Pancreas (tissue), 10 donors: ENCODE measurements at regions of chr7 and their contacts with region 1.

Region 1: DNA sequence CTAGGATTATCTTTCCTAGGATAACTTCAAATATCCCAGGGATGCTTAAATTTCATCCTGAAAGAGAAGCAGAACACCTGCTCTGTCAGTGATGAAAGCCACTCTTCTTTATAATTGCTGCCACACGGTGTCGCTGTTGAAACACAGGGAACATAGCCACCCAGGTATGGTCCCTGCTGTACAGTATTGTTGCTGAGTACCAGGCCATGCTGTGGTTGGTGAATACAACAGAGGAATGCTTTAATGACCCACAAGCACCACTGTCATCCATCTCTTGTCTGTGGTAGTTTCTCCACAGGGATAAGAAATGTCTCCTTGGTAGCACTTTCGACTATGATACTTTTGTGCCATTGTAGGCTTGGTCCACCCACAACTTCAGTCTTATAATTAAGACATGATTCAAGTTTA is 70.6 kb upstream of the STARD3NL start:
- DNase-seq: peak in 5 of 6 donors; percentile 41 to 71 (median 50)
- ATAC-seq: peak; percentile 86 to 97 (median 94)
- H3K4me3 ChIP-seq: no peak overlapping the region
- H3K27ac ChIP-seq: no peak overlapping the region
- H3K4me1 ChIP-seq: no peaks in the 10 kb centered on the region
- H3K27me3 ChIP-seq: no peaks in the 10 kb centered on the region
- CTCF ChIP-seq: peak; percentile 60 to 76 (median 68)

Region 2: DNA sequence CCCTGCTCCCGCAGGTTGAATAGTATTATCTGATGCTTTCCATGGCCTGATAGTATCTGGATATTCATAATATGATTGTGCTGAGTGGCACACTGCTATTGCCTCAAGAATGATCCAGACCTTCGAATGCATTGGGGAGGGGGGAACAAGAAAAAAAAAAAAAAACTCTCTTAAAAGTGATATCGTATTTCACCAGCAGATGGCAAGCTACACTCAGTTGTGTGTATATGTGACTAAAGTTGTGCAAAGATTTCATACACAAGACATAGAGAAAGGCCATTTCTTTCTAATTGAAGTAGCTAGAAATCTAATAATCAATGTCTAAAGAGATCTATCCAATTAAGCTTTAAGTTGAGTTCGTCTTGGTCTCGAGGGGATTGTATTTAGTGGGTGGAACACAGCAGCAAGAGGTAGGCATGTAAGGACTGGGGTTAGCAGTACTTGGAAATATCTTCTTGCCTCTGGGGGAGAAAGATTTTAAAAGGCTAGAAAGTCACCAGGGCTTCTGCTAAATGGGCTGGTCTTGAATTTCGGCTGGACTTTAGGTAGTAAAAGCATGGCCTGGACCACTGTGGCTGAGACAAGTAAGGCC is 206.2 kb before region 1 on chr7:
- intact Hi-C with region 1: loop called in 1 of 3 experiments (anchors 10 kb)
- DNase-seq: no peak
- ATAC-seq: peak; percentile 70 to 87 (median 84)
- H3K4me3 ChIP-seq: no peak overlapping the region
- H3K27ac ChIP-seq: no peak overlapping the region
- H3K4me1 ChIP-seq: no peaks in the 10 kb centered on the region
- H3K27me3 ChIP-seq: no peaks in the 10 kb centered on the region
- CTCF ChIP-seq: peak in 3 of 4 donors; percentile 27 to 46 (median 31)

Region 3: DNA sequence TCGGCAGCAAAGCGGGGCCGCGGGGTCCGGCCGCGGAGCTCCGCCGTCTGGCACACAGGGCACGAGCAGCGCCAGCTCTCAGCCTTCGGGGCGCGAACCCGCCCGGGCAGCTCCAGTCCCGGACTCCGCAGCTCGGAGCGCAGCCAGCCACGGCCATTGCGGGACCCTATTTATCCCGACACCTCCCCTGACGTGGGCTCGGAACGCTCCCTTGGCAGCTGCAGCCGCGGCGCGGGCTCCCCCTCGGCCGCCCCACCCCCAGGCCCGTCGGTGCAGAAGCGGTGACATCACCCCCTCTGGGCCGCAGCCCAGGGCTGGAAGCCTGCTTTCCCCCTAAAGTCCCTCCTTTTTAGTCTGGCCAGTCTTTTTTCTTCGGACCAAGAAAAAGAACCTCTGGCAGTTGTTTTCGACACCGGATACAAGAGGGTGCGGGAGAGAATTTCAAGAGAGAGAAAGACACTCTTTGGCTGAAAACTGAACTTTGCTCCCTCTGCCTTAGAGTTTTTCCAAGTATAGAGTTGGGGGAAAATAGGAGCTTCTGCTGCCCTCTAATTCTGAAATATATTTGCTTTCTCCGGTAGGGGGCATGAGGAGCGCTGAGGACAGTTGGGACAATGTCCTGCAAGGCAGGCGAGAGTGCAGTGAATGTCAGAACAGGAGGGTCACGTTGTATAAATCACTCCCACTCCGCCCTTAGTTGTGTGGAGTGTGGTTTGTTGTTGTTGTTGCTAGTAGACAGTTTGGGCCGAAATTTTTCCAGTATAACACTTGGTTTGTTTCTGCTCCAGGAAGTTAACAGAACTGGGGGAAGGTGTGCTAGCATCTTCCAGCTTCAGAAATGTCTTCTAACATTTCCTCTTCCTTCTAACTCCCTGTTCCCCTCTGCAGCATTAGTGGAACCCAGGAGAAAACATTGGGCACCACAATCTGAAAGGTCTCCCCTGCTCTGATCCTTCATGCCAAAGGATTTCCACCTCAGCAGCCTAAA is 190.5 kb before region 1 on chr7 and contains the start of gene SFRP4:
- intact Hi-C with region 1: loop called in 1 of 3 experiments (anchors 10 kb)
- DNase-seq: peak; percentile 66 to 81 (median 73)
- ATAC-seq: peak; percentile 65 to 76 (median 70)
- H3K4me3 ChIP-seq: peak within 1 kb of the TSS; percentile 35 to 62 (median 53)
- H3K27ac ChIP-seq: peak within 1 kb of the TSS; percentile 6 to 55 (median 38)
- H3K4me1 ChIP-seq: peaks cover 0 to 17% (median 0%) of the 10 kb centered on the region in 3 donors
- H3K27me3 ChIP-seq: no peaks in the 10 kb centered on the region
- CTCF ChIP-seq: peak in 3 of 4 donors; percentile 54 to 61 (median 54)
- total RNA-seq, gene SFRP4: 0.47 to 21.3 (median 1.5) TPM

Region 4: GRCh38 chr7:38168890-38169570 is 61.5 kb after region 1 on chr7:
- intact Hi-C with region 1: no loop called
- DNase-seq: no peak
- ATAC-seq: no peak
- H3K4me3 ChIP-seq: no peak overlapping the region
- H3K27ac ChIP-seq: no peak overlapping the region
- H3K4me1 ChIP-seq: no peaks in the 10 kb centered on the region
- H3K27me3 ChIP-seq: no peaks in the 10 kb centered on the region
- CTCF ChIP-seq: no peak

Region 5: GRCh38 chr7:38222481-38223096 is 115.1 kb after region 1 on chr7:
- intact Hi-C with region 1: loop called in 2 of 3 experiments (anchors 5 kb)
- DNase-seq: peak in 2 of 6 donors; percentile 17 to 29
- ATAC-seq: peak; percentile 88 to 97 (median 93)
- H3K4me3 ChIP-seq: no peak overlapping the region
- H3K27ac ChIP-seq: no peak overlapping the region
- H3K4me1 ChIP-seq: no peaks in the 10 kb centered on the region
- H3K27me3 ChIP-seq: no peaks in the 10 kb centered on the region
- CTCF ChIP-seq: peak; percentile 68 to 85 (median 76)

Region 6: DNA sequence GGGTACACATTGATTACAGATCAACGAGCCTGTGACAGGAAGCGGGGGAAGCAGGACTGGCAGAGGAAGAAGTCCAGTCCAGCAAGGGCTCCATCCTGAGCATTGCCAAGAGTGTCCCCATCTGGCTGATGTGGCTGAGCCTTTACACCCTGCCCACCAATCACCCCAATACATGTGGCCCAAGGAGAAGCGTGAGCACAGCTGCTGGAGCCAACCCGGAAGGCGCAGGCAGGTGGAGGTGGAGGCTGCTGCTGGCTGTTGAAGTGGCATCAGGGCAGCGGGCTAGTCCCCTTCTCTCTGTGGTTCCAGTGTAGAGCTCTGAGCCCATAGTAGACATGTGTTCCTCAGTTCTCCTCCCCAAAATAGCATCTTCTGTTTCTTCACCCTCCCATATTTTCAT is 530.5 kb after region 1 on chr7:
- intact Hi-C with region 1: no loop called
- DNase-seq: no peak
- ATAC-seq: no peak
- H3K4me3 ChIP-seq: no peak overlapping the region
- H3K27ac ChIP-seq: no peak overlapping the region
- H3K4me1 ChIP-seq: no peaks in the 10 kb centered on the region
- H3K27me3 ChIP-seq: no peaks in the 10 kb centered on the region
- CTCF ChIP-seq: no peak